ENCODE measurements at regions of chr17 and their contacts with region 1.

Region 1: GRCh38 chr17:42405963-42406495 is 17.0 kb downstream of the CAVIN1 start:
- DNase-seq: peak; percentile 90
- ATAC-seq: peak; percentile 78 to 81
- H3K4me3 ChIP-seq: peak overlapping the region; percentile 29
- H3K27ac ChIP-seq: peak overlapping the region; percentile 61
- H3K4me1 ChIP-seq: peaks cover 85% of the 10 kb centered on the region
- H3K27me3 ChIP-seq: no peaks in the 10 kb centered on the region
- CTCF ChIP-seq: peak; percentile 88

Region 2: DNA sequence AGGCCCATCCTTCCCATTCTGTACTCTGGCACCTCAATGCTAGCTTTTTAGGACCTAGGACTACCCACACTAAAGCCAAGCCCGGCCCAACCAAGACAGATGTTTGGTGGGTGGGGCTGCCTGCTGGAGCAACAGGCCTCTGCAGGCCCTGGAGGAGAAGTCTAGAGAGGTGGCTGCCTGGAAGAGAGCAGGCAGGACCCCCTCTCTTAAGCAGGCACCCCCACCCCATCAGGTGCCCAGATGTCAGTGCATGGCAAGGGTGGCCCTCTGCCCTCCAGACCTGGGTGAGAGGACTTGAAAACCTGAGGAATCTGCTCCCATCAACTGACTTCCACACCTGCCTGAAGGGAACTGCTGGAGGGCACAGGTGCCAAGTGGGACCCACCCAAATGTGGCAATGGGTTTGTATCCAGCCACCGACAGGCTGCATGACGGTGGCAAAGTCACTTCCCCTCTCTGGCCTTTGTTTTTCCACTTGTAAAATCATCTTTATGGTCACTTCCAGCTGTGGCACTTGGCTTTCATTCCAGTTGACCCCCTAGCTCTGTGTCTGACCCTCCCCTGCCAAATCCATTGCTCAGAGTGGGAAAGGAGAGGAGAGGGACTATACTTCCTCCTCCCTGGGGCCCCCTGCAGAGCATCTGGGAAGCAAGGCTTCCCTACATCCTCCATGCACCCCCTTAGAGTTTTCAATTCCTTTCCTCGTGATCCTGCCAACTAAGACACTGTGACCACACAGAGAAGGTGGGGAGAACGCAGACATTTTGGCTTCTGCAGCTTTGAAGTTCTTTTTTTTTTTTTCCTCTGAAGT is 119.4 kb before region 1 on chr17:
- intact Hi-C with region 1: no loop called
- DNase-seq: no peak
- ATAC-seq: no peak
- H3K4me3 ChIP-seq: peak overlapping the region; percentile 74
- H3K27ac ChIP-seq: peak overlapping the region; percentile 95
- H3K4me1 ChIP-seq: peaks cover 48% of the 10 kb centered on the region
- H3K27me3 ChIP-seq: no peaks in the 10 kb centered on the region
- CTCF ChIP-seq: no peak

Region 3: GRCh38 chr17:42322382-42323267 is 83.4 kb before region 1 on chr17:
- intact Hi-C with region 1: loop called (anchors 5 kb)
- DNase-seq: peak; percentile 94
- ATAC-seq: peak; percentile 79 to 94
- H3K4me3 ChIP-seq: no peak overlapping the region
- H3K27ac ChIP-seq: peak overlapping the region; percentile 56
- H3K4me1 ChIP-seq: peaks cover 34% of the 10 kb centered on the region
- H3K27me3 ChIP-seq: no peaks in the 10 kb centered on the region
- CTCF ChIP-seq: peak; percentile 99

Region 4: DNA sequence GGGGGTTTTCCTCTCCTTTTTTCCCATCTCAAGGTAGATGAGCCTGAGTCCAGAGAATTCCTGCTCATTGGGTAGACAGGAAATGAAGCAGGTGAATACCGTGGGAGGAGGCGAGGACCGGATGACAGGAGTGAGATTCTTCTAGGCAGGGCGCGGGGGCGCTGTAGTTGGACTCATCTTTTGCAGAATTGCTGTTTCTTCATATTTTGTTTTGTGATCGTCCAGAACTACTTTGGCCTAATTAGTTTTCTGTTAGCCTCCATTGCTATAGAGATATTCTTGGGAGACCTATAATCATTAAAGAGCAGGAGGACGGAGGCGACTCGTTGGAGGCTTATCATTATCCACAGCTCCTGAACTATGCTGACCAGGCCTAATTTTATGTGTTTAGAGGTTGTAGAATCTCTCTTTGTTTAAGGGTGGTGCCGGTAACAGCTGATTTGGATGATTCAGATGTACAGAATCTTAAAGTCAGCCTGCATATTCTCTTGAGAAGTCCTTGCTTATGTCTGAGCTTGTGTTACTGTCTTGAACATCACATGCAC is 53.3 kb after region 1 on chr17:
- intact Hi-C with region 1: no loop called
- DNase-seq: peak; percentile 64
- ATAC-seq: peak; percentile 49 to 56
- H3K4me3 ChIP-seq: peak overlapping the region; percentile 73
- H3K27ac ChIP-seq: peak overlapping the region; percentile 89
- H3K4me1 ChIP-seq: peaks cover 52% of the 10 kb centered on the region
- H3K27me3 ChIP-seq: no peaks in the 10 kb centered on the region
- CTCF ChIP-seq: peak; percentile 17

Measured in lower lobe of right lung (tissue), 2 donors.